OCI-LY7 (cell line): ENCODE measurements at regions of chr22 and their contacts with region 1.

Region 1: GRCh38 chr22:31211862-31212730 is at the start of gene LIMK2:
- DNase-seq: peak; percentile 96
- H3K4me3 ChIP-seq: peak within 1 kb of the TSS; percentile 97
- H3K27ac ChIP-seq: no peak within 1 kb of the TSS
- H3K4me1 ChIP-seq: peaks cover 16% of the 10 kb centered on the region
- CTCF ChIP-seq: peak; percentile 90
- total RNA-seq, gene LIMK2: 16.2 and 24.8 TPM in 2 replicates

Region 2: DNA sequence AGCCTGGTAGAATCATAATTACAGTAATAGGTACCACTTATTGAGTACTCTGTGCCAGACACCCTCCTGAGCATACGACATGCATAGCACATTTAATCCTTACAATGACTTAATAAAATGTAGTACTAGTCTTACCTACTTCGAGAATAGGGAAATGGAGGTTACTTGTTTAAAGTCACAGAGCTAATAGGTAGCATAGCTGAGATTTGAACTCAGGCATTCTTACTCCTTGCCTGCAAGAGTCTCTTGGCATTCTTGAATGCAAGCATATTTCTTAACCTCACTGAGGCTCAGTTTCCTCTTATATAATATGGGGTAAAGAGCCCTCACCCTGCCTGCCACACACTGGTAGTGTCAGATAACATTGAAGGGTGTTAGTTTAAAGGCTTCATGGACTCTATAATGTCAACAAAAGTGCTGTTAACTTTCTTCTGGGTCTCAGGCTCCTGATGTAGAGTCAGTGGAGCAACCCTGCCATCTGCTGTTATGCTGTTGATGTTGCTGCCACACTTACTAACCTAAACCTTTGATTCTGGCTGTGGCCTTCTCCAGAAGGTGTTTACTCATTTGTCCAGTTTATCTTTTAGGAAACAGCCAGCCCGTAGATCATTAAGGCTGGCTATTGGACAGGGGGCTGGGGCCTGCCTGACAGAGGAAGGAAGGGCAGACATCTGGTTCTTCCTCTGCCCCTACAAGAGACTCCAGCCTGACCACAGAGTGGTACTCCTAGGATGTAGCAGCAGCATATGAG is 18.9 kb after region 1 on chr22:
- CTCF ChIA-PET with region 1: interaction called, 8 read pairs
- POLR2A ChIA-PET with region 1: interaction called, 3 read pairs
- intact Hi-C with region 1: loop called (anchors 1 kb)
- DNase-seq: peak; percentile 63
- H3K4me3 ChIP-seq: no peak overlapping the region
- H3K27ac ChIP-seq: no peak overlapping the region
- H3K4me1 ChIP-seq: no peaks in the 10 kb centered on the region
- CTCF ChIP-seq: peak; percentile 85

Region 3: GRCh38 chr22:31272522-31273446 is 60.7 kb after region 1 on chr22:
- CTCF ChIA-PET with region 1: interaction called, 5 read pairs
- POLR2A ChIA-PET with region 1: interaction called, 3 read pairs
- intact Hi-C with region 1: loop called (anchors 1 kb)
- DNase-seq: peak; percentile 66
- H3K4me3 ChIP-seq: no peak overlapping the region
- H3K27ac ChIP-seq: no peak overlapping the region
- H3K4me1 ChIP-seq: no peaks in the 10 kb centered on the region
- CTCF ChIP-seq: peak; percentile 89

Region 4: DNA sequence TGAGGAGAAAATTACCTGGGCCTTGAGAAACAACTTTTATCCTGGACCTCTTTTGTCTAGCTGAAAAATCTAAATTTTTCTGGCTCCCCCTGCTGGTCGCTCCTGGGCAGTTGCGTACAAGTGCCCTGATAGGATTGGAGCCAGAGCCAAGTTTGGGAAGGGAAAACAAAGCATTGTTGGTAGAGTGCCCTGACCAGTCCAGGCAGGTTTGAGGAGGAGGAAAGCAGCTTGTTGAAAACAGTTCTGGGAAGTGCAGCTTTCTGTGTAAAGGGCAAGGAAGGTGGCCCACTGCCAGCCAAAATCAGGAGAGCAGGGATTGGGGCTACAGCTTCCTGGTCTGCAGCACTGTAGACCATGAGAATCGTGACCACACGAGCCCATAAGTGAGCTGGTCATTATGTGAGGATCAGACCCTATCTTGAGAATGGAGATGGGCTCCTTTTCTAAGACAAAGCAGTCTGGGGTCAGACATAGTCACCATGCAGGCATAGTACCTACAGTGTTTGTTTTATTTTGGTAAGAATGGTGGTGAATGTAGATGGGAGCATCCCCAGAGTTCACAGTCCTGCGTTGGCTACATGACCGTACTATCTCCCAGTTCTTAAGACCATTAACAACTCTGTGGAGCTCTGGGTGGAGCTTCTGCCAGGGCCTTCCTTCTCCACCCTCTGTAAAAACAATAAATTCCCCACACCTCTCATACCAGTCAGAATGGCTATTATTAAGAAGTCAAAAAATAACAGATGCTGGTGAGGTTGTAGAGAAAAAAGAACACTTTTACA is 101.5 kb after region 1 on chr22:
- CTCF ChIA-PET with region 1: interaction called, 3 read pairs
- POLR2A ChIA-PET with region 1: no interaction called
- intact Hi-C with region 1: loop called (anchors 1 kb)
- DNase-seq: peak; percentile 63
- H3K4me3 ChIP-seq: no peak overlapping the region
- H3K27ac ChIP-seq: no peak overlapping the region
- H3K4me1 ChIP-seq: peaks cover 3% of the 10 kb centered on the region
- CTCF ChIP-seq: peak; percentile 93